ENCODE measurements at regions of chr16 and their contacts with region 1.

Region 1: DNA sequence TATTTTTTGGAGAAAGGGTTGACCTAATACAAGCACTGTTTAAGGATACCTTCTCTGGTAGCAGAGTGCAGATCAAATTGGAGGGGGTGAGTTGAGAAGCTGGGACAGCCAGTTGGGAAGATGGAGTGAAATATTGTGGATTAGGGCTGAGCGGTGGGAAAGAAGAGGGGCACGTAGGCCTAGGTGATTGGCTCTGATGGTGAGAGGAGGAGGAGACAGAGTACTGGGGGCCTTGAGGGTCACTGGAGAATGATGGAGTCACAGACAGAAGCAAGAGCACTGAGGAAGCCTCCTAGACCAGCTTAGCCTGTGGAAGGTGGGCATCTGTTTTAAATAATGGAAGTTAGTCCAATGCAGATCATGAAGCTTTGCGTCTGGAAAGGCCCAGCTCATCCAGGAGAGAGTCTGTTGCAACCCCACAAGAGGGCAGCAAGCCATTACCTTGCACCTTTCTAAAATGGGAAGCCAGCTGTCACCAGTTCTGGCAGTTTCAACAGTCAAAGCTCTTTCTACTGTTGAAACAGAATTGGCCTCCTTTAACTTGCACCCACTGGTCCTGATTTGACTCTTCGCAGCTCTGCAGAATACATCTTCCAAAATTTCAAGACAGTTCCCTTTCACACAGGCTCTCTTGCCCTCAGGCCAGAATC is 11.8 kb downstream of the SLC9A5 start:
- DNase-seq: peak; percentile 48 to 53
- H3K4me3 ChIP-seq: no peak overlapping the region
- H3K27ac ChIP-seq: no peak overlapping the region
- H3K4me1 ChIP-seq: no peaks in the 10 kb centered on the region
- H3K27me3 ChIP-seq: no peaks in the 10 kb centered on the region
- CTCF ChIP-seq: peak; percentile 61

Region 2: GRCh38 chr16:67284699-67285646 is 24.4 kb after region 1 on chr16:
- CTCF ChIA-PET with region 1: interaction called, 16 read pairs
- POLR2A ChIA-PET with region 1: no interaction called
- intact Hi-C with region 1: no loop called
- DNase-seq: peak; percentile 75 to 93
- H3K4me3 ChIP-seq: no peak overlapping the region
- H3K27ac ChIP-seq: no peak overlapping the region
- H3K4me1 ChIP-seq: peaks cover 11% of the 10 kb centered on the region; the same call in 1 of the 2 replicates
- H3K27me3 ChIP-seq: no peaks in the 10 kb centered on the region
- CTCF ChIP-seq: peak; percentile 67; the same call in 1 of the 2 replicates

Region 3: GRCh38 chr16:67339453-67339852 is 78.9 kb after region 1 on chr16:
- CTCF ChIA-PET with region 1: interaction called, 10 read pairs
- POLR2A ChIA-PET with region 1: no interaction called
- intact Hi-C with region 1: loop called (anchors 5 kb)
- DNase-seq: no peak
- H3K4me3 ChIP-seq: no peak overlapping the region
- H3K27ac ChIP-seq: no peak overlapping the region
- H3K4me1 ChIP-seq: no peaks in the 10 kb centered on the region
- H3K27me3 ChIP-seq: no peaks in the 10 kb centered on the region
- CTCF ChIP-seq: no peak

Region 4: DNA sequence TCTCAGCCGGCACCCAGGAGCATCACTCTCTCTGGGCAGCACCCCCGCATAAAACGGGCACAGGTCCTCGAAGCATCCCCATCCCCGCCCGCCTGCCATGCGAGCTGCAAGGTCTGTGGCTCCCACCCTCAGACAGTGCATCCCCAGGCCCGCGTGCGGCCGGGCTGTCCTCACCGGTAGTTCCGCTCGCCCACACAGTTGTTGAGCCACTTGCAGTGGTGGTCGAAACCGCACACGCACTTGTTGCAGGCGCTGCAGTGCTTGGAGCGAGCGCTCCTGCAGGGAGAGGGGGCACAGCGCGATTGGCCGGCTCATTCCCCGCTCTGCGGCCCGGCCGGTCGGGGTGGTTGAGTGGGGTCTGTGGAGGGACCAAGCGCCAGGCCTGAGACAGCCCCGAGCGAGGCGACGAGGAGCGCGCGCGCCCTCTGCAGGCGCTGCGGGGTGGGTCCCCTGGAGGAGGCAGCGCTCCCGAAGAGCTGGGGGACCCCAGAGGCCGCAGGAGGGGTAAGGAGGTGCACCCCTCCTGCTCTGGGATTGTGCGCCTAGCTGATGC is 138.7 kb after region 1 on chr16:
- CTCF ChIA-PET with region 1: interaction called, 4 read pairs
- POLR2A ChIA-PET with region 1: no interaction called
- intact Hi-C with region 1: loop called (anchors 2 kb)
- DNase-seq: peak in 1 of 2 experiments; percentile 46
- H3K4me3 ChIP-seq: no peak overlapping the region
- H3K27ac ChIP-seq: no peak overlapping the region
- H3K4me1 ChIP-seq: peaks cover 25% of the 10 kb centered on the region
- H3K27me3 ChIP-seq: no peaks in the 10 kb centered on the region
- CTCF ChIP-seq: no peak